Sciatic nerve (tissue), 2 donors: ENCODE measurements at regions of chr9 and their contacts with region 1.

Region 1: DNA sequence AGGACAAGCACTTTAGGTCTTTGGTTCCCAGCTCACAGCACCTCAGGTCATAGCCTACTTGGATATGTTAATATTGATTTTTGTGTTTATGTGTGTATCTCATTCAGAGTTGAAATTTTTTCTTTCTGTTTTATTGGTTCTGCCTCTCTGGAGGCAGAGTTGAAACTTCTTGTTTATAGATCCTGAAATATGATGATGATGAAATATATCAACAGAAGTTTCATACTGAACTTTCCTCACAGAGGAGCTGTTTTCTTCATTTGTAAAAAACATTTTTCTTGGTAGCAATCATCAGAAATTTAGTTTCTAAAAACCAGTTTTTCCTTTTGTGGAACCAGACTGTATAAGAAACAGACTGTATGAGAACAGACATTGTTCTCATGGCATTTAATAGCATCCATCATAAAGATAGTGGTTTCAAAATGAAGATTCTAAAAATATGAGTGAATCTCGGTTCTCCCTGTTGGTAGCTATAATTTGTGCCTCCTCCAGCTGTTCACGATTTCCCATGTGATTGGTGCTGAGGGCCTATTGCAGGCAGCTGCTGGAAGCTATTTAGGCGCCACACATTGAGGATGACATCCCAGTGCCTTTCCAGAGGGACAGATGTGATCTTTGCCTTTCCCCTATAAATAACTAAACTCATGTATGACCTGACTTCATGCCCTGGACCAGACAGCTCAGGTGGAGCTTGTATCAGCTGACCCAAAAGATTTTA is 39.5 kb upstream of the CFAP157 start:
- DNase-seq: no peak
- ATAC-seq: peak; percentile 54

Region 2: GRCh38 chr9:127406799-127407509 is 260.3 kb before region 1 on chr9:
- intact Hi-C with region 1: no loop called
- DNase-seq: no peak
- ATAC-seq: peak; percentile 21

Region 3: DNA sequence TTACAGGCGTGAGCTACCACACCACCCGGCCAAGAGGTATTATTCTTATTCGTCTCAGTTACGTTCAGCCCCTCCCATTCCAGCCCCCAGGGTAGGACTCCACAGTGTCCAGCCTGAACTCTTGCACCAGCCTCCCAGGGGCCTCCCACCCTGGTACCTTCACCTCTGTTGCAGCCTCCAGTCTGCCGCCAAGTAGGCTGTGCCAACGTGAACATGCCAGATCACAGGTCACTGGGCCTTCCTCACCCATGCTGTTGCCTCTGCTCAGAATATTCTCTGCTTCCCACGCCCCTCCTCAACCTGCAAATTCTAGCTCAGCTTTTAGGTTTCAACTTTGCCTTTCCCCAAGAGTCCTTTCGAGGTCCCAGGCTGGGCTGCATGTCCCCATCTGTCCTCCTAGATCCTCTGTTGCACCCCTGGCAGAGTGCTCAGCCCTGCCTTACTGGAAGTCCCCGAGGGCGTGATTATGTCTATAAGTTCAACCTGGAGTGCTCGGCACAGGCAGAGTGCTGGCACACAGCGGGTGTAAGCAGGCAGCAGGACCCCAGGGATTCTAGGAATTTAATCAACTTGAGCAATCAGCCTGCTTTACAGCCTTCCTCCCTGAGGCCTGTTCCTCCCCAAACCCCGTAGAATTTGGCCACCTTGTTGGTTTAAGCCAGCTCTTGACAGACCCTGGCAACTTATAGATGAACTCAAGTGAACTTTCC is 68.3 kb before region 1 on chr9:
- intact Hi-C with region 1: loop called (anchors 2 kb)
- DNase-seq: no peak
- ATAC-seq: peak; percentile 32